IMR-90 (cell line): ENCODE measurements at regions of chr4 and their contacts with region 1.

Region 1: DNA sequence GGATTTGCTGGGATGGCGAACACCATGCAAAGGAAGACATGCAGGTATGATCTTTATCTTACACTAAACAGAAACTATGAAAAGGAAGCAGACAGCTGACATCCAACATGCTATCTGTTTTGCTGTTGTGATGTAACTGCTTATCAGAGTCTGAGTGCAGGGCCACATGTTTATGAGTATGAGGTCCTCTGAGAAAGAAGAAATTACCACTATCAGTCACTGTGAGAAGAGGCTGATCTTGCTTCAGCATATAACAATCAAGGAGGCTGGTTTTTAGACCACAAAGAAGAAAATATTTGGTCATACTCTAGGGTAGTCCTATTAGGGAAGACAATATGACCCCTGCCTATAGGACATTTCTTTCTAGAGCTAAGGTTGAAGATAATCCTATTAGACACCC is 18.5 kb downstream of the CLGN start:
- DNase-seq: no peak
- ATAC-seq: no peak
- H3K4me3 ChIP-seq: no peak overlapping the region
- H3K27ac ChIP-seq: no peak overlapping the region
- H3K4me1 ChIP-seq: no peaks in the 10 kb centered on the region
- H3K27me3 ChIP-seq: no peaks in the 10 kb centered on the region; the same call in 1 of the 2 replicates
- CTCF ChIP-seq: no peak
- POLR2A ChIP-seq: no peak
- RAD21 ChIP-seq: no peak

Region 2: GRCh38 chr4:139922406-139923024 is 486.5 kb before region 1 on chr4:
- CTCF ChIA-PET with region 1: no interaction called
- POLR2A ChIA-PET with region 1: interaction called, 12 read pairs
- dilution Hi-C with region 1: no loop called
- in situ Hi-C with region 1: no loop called
- intact Hi-C with region 1: no loop called
- DNase-seq: peak; percentile 50
- ATAC-seq: no peak
- H3K4me3 ChIP-seq: no peak overlapping the region
- H3K27ac ChIP-seq: no peak overlapping the region
- H3K4me1 ChIP-seq: peaks cover 11% of the 10 kb centered on the region
- H3K27me3 ChIP-seq: no peaks in the 10 kb centered on the region
- CTCF ChIP-seq: no peak
- POLR2A ChIP-seq: no peak
- RAD21 ChIP-seq: no peak